Activated CD4-positive, alpha-beta T cell treated with anti-CD3 and anti-CD28 coated beads, Interleukin-2, amount 10 ng/mL, durations not matched to agents 24 days and 14 days (primary cell): ENCODE measurements at regions of chr2 and their contacts with region 1.

Region 1: DNA sequence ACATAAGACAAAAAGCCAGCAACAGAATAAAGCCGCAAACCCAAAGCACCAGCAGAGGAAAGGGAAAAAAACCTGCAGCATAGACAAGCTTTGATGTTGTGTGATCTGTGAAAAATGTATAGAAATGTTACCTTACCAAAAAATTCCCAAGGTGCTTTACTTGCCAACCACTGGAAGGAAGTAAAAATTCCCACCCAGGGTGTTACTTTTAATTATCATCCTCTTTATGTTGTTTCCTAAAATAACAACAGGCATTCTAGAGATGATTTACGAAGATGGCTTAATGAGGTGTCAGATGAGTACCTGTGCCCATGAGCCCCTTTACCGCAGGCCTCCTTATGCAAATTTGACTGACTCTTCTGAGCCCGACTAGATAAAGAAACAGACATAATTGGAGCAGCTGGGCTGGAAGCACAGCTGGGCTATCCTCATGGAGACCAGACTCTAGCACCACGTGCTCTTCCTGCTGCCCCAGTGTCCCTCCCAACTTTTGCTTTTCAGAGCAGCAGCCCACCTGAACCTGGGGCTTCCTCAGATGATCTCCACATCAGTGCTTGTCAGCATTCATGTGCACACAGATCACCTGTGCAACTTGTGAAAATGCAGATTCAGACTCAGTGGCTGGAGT is 41.5 kb downstream of the SRSF7 start:
- DNase-seq: peak; percentile 82
- H3K4me3 Mint-ChIP-seq: peak overlapping the region; percentile 72
- H3K27ac Mint-ChIP-seq: peak overlapping the region; percentile 86
- H3K4me1 Mint-ChIP-seq: peaks cover 67% of the 10 kb centered on the region
- H3K27me3 Mint-ChIP-seq: no peaks in the 10 kb centered on the region

Region 2: GRCh38 chr2:38690499-38691294 is 19.0 kb before region 1 on chr2:
- intact Hi-C with region 1: loop called (anchors 2 kb)
- DNase-seq: no peak
- H3K4me3 Mint-ChIP-seq: no peak overlapping the region
- H3K27ac Mint-ChIP-seq: peak overlapping the region; percentile 86
- H3K4me1 Mint-ChIP-seq: peaks cover 46% of the 10 kb centered on the region
- H3K27me3 Mint-ChIP-seq: no peaks in the 10 kb centered on the region

Region 3: DNA sequence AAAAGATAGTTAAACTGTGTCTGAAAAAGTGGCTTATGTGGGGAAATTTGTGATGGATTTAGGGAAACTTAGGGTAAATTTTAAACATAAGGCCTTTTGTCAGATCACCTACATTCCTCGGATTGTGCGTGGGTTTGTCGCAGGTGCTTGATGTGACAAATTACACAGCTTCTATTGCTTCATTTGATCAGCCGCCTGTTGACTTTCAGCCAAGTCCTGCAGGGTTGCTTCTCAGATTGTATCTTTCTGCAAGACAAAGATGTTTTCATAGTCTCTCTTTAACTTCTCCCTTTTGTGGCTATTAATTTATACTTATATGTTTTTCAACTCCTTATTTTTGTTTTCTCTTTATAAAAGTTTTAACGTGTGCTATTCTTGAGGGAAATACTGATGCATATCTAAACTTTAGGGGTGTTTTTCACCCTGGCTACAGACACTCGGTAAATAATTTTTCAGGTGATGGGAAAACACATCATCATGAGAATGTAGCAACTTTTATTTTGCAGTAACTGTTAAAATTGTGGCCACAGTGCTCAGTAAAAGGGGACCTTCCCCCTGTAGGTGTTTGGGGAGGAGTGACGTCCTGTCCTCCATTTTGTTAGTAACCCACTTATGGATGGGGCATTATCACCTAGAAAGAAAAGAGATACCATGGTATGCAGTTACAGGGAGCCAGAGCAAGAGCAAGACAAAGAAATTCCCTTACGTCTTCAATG is 12.4 kb before region 1 on chr2:
- intact Hi-C with region 1: loop called (anchors 1 kb)
- DNase-seq: no peak
- H3K4me3 Mint-ChIP-seq: no peak overlapping the region
- H3K27ac Mint-ChIP-seq: peak overlapping the region; percentile 81
- H3K4me1 Mint-ChIP-seq: peaks cover 58% of the 10 kb centered on the region
- H3K27me3 Mint-ChIP-seq: no peaks in the 10 kb centered on the region